Activated naive CD4-positive, alpha-beta T cell treated with anti-CD3 and anti-CD28 coated beads for 36 hours (primary cell): ENCODE measurements at regions of chr2 and their contacts with region 1.

Region 1: GRCh38 chr2:101998896-101999789 is 7.4 kb downstream of the IL1R2 start:
- DNase-seq: peak; percentile 73
- H3K4me3 Mint-ChIP-seq: peak overlapping the region; percentile 42
- H3K27ac Mint-ChIP-seq: peak overlapping the region; percentile 90
- H3K4me1 Mint-ChIP-seq: peaks cover 38% of the 10 kb centered on the region
- H3K27me3 Mint-ChIP-seq: no peaks in the 10 kb centered on the region

Region 2: DNA sequence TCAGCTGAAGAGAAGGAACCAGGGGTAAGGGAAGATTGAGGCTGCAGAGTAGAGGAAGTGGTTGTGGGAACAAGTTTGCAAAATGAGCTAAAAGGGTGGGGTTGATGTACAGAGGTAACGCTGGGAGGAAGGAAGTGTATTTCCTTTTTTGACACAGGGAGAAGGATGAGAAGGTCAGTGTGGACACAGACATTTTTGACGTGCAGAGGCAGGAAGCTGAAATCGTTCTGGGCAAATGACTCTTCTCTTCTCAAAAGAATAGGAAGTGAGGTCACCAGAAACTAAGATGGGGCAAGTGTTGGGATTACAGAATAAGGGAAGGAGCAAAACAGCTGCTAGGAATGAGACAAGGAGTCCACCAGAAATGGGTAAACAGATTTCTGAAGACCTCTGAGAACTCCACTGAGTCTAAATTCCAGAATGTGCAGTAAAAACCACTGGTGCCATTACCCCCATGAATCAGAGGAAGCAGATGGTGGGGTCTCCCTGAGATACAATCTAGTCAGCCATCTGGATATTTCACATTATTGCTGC is 670.6 kb before region 1 on chr2:
- CTCF ChIA-PET with region 1: no interaction called
- intact Hi-C with region 1: loop called (anchors 5 kb)
- DNase-seq: peak; percentile 60
- H3K4me3 Mint-ChIP-seq: no peak overlapping the region
- H3K27ac Mint-ChIP-seq: no peak overlapping the region
- H3K4me1 Mint-ChIP-seq: peaks cover 18% of the 10 kb centered on the region
- H3K27me3 Mint-ChIP-seq: no peaks in the 10 kb centered on the region

Region 3: GRCh38 chr2:101831351-101831865 is 167.7 kb before region 1 on chr2:
- CTCF ChIA-PET with region 1: interaction called, 3 read pairs
- intact Hi-C with region 1: loop called (anchors 1 kb)
- DNase-seq: peak; percentile 76
- H3K4me3 Mint-ChIP-seq: peak overlapping the region; percentile 7
- H3K27ac Mint-ChIP-seq: peak overlapping the region; percentile 87
- H3K4me1 Mint-ChIP-seq: peaks cover 55% of the 10 kb centered on the region
- H3K27me3 Mint-ChIP-seq: no peaks in the 10 kb centered on the region

Region 4: DNA sequence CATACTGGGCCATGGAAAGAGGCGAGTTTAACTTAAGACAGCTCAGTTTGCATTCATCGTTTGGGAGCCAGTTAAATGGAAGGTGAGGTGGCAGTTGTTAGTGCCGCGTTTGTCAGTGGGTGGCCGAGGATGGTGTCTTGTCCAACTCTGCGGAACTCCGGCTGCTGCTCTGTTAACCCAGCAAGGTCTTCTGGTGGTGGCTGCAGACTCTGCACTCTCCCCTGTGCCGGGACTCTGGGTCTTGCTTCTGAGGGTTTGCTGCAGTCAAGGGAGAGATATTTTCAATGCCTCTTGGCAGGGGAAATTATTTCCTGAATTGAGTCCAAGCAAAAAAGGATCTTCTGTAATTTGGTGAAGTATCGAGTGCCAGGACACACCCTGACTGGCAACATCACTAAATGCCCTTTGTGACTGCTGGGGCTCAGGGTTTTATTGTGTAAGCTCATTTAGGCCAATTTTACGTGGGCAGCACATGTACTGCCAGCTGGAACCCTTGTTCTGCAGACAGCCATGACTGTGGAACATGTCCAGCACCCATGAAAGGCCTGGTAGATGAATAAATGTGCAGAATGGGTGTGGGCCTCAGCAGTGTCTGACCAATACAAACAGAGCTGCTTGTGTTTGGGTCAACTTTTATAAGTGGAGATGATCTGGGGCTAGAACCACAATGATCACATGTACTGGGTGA is 50.8 kb after region 1 on chr2:
- CTCF ChIA-PET with region 1: no interaction called
- intact Hi-C with region 1: no loop called
- DNase-seq: no peak
- H3K4me3 Mint-ChIP-seq: no peak overlapping the region
- H3K27ac Mint-ChIP-seq: no peak overlapping the region
- H3K4me1 Mint-ChIP-seq: no peaks in the 10 kb centered on the region
- H3K27me3 Mint-ChIP-seq: peaks cover 14% of the 10 kb centered on the region

Region 5: GRCh38 chr2:102063941-102064678 is 65.0 kb after region 1 on chr2:
- CTCF ChIA-PET with region 1: no interaction called
- intact Hi-C with region 1: loop called (anchors 1 kb)
- DNase-seq: peak; percentile 73
- H3K4me3 Mint-ChIP-seq: no peak overlapping the region
- H3K27ac Mint-ChIP-seq: peak overlapping the region; percentile 44
- H3K4me1 Mint-ChIP-seq: peaks cover 27% of the 10 kb centered on the region
- H3K27me3 Mint-ChIP-seq: no peaks in the 10 kb centered on the region

Region 6: GRCh38 chr2:102137138-102137537 is 138.0 kb after region 1 on chr2:
- CTCF ChIA-PET with region 1: interaction called, 7 read pairs
- intact Hi-C with region 1: loop called (anchors 1 kb)
- DNase-seq: peak; percentile 72
- H3K4me3 Mint-ChIP-seq: no peak overlapping the region
- H3K27ac Mint-ChIP-seq: peak overlapping the region; percentile 62
- H3K4me1 Mint-ChIP-seq: peaks cover 39% of the 10 kb centered on the region
- H3K27me3 Mint-ChIP-seq: peaks cover 26% of the 10 kb centered on the region

Region 7: DNA sequence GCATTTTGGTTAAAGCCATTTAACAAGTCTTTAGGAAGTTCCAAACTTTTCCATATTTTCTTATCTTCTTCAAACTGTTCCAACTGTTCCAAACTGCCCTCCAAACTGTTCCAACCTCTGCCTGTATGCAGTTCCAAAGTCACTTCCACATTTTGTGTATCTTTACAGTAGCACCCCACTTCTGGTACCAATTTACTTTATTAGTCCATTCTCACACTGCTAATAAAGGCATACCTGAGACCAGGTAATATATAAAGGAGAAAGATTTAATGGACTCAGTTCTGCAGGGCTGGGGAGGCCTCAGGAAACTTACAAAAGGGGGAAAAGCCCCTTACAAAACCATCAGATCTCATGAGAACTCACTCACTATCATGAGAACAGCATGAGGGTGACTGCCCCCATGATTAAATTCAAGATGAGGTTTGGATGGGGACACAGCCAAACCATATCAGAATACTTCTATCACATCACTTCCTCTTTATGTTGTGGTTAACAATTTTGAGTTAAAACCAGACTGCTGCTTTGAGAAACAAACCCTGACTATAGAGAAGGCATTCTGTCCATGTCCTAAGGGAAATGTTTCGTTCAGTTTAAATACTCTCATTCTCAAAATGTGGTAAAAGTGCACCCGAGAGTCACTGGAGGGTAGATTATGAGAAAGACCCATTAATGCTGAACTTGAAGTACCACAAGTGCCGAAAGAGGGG is 367.4 kb after region 1 on chr2:
- CTCF ChIA-PET with region 1: no interaction called
- intact Hi-C with region 1: loop called (anchors 1 kb)
- DNase-seq: peak; percentile 52
- H3K4me3 Mint-ChIP-seq: peak overlapping the region; percentile 20
- H3K27ac Mint-ChIP-seq: peak overlapping the region; percentile 94
- H3K4me1 Mint-ChIP-seq: peaks cover 80% of the 10 kb centered on the region
- H3K27me3 Mint-ChIP-seq: no peaks in the 10 kb centered on the region